A549 (cell line): ENCODE measurements at regions of chr12 and their contacts with region 1.

Region 1: DNA sequence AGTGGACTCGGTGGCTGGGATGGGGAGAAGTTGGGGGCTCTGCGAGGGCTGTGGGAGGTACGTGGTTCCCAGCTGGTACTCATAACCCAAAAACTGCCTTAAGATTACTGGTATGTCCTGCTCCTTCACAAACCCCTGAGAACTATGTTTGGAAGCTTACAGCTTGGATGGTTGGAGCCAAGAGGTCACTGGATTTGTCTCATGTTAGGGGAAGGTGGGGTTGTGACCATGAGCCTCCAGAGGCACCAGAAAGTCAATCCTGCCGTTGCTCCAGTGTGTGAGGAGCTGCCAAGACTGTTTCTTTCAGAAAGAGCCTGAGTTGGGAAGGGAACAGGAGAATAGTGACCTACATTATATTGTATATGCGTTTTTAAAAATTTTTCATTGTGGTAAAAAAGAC is 33.5 kb downstream of the TEAD4 start:
- DNase-seq: no peak
- ATAC-seq: no peak
- H3K4me3 ChIP-seq: no peak overlapping the region
- H3K27ac ChIP-seq: no peak overlapping the region
- H3K4me1 ChIP-seq: no peaks in the 10 kb centered on the region
- CTCF ChIP-seq: no peak
- EP300 ChIP-seq: no peak
- POLR2A ChIP-seq: no peak
- RAD21 ChIP-seq: no peak

Region 2: GRCh38 chr12:2930865-2931264 is 61.9 kb before region 1 on chr12:
- CTCF ChIA-PET with region 1: no interaction called
- POLR2A ChIA-PET with region 1: no interaction called
- DNase-seq: no peak
- ATAC-seq: no peak
- H3K4me3 ChIP-seq: no peak overlapping the region
- H3K27ac ChIP-seq: no peak overlapping the region
- H3K4me1 ChIP-seq: no peaks in the 10 kb centered on the region
- CTCF ChIP-seq: no peak
- EP300 ChIP-seq: no peak
- POLR2A ChIP-seq: no peak
- RAD21 ChIP-seq: no peak

Region 3: GRCh38 chr12:3004655-3005565 is 12.2 kb after region 1 on chr12:
- CTCF ChIA-PET with region 1: interaction called, 17 read pairs
- POLR2A ChIA-PET with region 1: no interaction called
- DNase-seq: peak in 1 of 2 experiments; percentile 55
- ATAC-seq: peak; percentile 70 to 78
- H3K4me3 ChIP-seq: no peak overlapping the region
- H3K27ac ChIP-seq: no peak overlapping the region
- H3K4me1 ChIP-seq: no peaks in the 10 kb centered on the region
- CTCF ChIP-seq: no peak; the same call in 2 of the 3 replicates
- EP300 ChIP-seq: no peak
- POLR2A ChIP-seq: no peak
- RAD21 ChIP-seq: no peak

Region 4: DNA sequence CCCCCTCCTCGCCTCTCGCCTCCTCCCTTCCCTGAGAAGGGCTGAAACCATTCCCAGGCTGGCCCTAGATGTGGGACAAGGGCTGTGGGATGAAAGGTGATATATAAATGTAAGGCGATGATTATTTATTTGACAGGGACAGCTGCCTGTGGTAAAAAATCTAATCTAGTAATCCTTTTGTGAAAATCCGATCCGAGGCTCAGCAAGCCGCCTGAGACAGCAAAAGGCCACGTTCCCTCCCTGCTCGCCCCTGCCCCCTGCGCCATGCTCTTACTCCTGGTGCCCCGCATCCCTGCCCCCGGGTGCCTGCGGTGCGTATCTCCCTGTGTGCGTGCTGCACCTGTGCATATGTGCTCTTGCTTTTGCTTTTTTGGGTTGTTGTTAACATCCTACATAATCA is 149.7 kb after region 1 on chr12:
- CTCF ChIA-PET with region 1: no interaction called
- POLR2A ChIA-PET with region 1: no interaction called
- DNase-seq: no peak
- ATAC-seq: no peak
- H3K4me3 ChIP-seq: no peak overlapping the region
- H3K27ac ChIP-seq: no peak overlapping the region
- H3K4me1 ChIP-seq: peaks cover 2% of the 10 kb centered on the region; the same call in 1 of the 3 replicates
- CTCF ChIP-seq: no peak
- EP300 ChIP-seq: no peak
- POLR2A ChIP-seq: no peak
- RAD21 ChIP-seq: no peak